ENCODE measurements at regions of chr16 and their contacts with region 1.

Region 1: DNA sequence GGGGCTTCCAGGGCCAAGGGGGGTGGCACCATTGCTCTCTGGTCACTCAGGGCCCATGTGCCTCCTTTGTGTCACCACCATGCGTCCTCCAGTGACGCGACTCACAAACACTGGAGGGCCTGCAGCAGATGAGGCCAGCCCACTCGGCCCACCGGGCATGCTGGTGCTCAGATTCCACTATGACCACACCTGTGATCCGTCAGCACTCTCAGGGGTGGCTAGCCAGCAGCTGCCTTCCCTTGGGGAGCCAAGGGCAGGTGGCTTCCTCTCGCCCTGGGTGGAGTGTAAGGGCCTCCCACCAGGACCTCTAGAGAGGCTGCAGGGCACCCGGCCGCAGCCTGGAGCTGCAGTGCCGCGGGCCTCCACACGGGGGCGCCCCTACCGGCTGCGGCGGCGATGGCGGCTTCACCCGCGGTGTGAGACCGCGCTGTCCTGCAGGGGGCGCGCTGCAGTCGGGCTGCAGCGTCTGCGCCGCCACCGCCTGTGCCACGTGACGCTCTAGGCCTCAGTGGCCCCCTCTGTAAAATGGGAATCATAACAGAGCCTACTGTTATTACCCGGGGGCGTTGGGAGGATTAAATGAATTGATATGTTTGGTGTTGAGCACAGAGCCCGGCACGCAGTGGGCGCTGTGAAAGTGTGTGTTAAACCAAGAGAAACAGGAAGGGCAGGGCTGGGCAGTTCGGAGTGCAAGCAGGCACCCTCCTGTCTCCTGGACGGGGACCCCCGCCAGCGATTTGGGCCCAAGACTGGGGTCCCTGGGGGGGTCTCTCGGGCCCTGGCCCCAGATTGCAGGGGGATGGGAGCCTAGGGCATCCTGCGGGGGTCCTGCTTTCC is 192.4 kb upstream of the GSE1 start:
- DNase-seq: peak; percentile 63 to 77 (median 67)
- H3K4me3 ChIP-seq: no peak overlapping the region
- H3K4me3 Mint-ChIP-seq: no peak overlapping the region
- H3K27ac ChIP-seq: no peak overlapping the region
- H3K27ac Mint-ChIP-seq: peak overlapping the region in 2 of 7 donors; percentile 2 to 43
- H3K4me1 ChIP-seq: peaks cover 0 to 4% of the 10 kb centered on the region in 2 donors
- H3K4me1 Mint-ChIP-seq: peaks cover 7% of the 10 kb centered on the region
- H3K27me3 ChIP-seq: no peaks in the 10 kb centered on the region
- H3K27me3 Mint-ChIP-seq: peaks cover 6 to 18% (median 7%) of the 10 kb centered on the region in 3 donors
- CTCF ChIP-seq: peak; percentile 100

Region 2: GRCh38 chr16:85316321-85316919 is 104.3 kb before region 1 on chr16:
- intact Hi-C with region 1: no loop called
- DNase-seq: peak; percentile 51 to 57 (median 54)
- H3K4me3 ChIP-seq: no peak overlapping the region
- H3K4me3 Mint-ChIP-seq: no peak overlapping the region
- H3K27ac ChIP-seq: no peak overlapping the region
- H3K27ac Mint-ChIP-seq: no peak overlapping the region
- H3K4me1 ChIP-seq: peaks cover 1 to 3% of the 10 kb centered on the region in 2 donors
- H3K4me1 Mint-ChIP-seq: peaks cover 9% of the 10 kb centered on the region
- H3K27me3 ChIP-seq: peaks cover 0 to 5% of the 10 kb centered on the region in 2 donors
- H3K27me3 Mint-ChIP-seq: peaks cover 14 to 23% (median 19%) of the 10 kb centered on the region in 3 donors
- CTCF ChIP-seq: peak; percentile 91

Region 3: GRCh38 chr16:85564277-85565051 is 143.7 kb after region 1 on chr16:
- intact Hi-C with region 1: loop called in 1 of 2 experiments (anchors 5 kb)
- DNase-seq: peak in 2 of 3 donors; percentile 29 to 41
- H3K4me3 ChIP-seq: no peak overlapping the region
- H3K4me3 Mint-ChIP-seq: peak overlapping the region in 1 of 2 donors; percentile 68
- H3K27ac ChIP-seq: no peak overlapping the region
- H3K27ac Mint-ChIP-seq: peak overlapping the region in 5 of 7 donors; percentile 2 to 80 (median 51)
- H3K4me1 ChIP-seq: peaks cover 42 to 72% of the 10 kb centered on the region in 2 donors
- H3K4me1 Mint-ChIP-seq: peaks cover 83% of the 10 kb centered on the region
- H3K27me3 ChIP-seq: no peaks in the 10 kb centered on the region
- H3K27me3 Mint-ChIP-seq: peaks cover 1 to 3% (median 1%) of the 10 kb centered on the region in 3 donors
- CTCF ChIP-seq: peak; percentile 30

Region 4: DNA sequence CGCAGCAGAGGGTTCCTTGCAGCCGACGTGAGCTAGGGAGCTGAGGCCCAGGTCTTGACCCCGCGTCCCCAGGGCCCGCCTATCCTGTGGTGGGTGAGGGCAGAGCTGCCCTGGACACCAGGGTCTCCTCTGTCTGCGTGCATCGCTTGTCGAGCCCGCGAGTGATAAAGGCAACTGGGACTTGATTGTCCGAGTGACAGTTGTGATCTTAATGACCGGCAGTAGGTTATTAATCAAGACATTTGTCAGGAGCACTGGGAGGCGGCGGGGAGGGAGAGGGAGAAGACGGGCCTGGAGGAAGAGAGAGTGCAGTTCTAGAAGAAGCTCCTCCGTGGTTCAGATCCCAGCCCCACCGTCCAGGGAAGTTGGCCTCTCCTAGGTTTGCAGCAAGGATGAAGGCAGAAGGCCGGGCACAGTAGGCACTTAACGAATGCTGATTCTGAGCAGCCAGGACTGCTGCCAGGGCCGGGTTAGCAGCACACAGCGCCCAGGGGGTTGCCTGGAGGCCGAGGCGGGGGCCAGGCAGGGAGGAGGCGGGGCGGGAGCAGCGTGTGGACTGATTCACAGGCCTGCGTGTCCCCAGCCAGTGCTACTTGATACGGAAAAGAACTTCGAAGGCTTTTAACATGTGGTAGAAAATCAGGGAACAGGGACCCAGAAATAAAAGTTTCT is 181.1 kb after region 1 on chr16:
- intact Hi-C with region 1: no loop called
- DNase-seq: no peak
- H3K4me3 ChIP-seq: no peak overlapping the region
- H3K4me3 Mint-ChIP-seq: no peak overlapping the region
- H3K27ac ChIP-seq: no peak overlapping the region
- H3K27ac Mint-ChIP-seq: no peak overlapping the region
- H3K4me1 ChIP-seq: peaks cover 14 to 16% of the 10 kb centered on the region in 2 donors
- H3K4me1 Mint-ChIP-seq: peaks cover 26% of the 10 kb centered on the region
- H3K27me3 ChIP-seq: no peaks in the 10 kb centered on the region
- H3K27me3 Mint-ChIP-seq: peaks cover 1 to 3% (median 2%) of the 10 kb centered on the region in 3 donors
- CTCF ChIP-seq: no peak

Measured in CD14-positive monocyte (primary cell).